Psoas muscle (tissue), 8 donors: ENCODE measurements at regions of chr16 and their contacts with region 1.

Region 1: DNA sequence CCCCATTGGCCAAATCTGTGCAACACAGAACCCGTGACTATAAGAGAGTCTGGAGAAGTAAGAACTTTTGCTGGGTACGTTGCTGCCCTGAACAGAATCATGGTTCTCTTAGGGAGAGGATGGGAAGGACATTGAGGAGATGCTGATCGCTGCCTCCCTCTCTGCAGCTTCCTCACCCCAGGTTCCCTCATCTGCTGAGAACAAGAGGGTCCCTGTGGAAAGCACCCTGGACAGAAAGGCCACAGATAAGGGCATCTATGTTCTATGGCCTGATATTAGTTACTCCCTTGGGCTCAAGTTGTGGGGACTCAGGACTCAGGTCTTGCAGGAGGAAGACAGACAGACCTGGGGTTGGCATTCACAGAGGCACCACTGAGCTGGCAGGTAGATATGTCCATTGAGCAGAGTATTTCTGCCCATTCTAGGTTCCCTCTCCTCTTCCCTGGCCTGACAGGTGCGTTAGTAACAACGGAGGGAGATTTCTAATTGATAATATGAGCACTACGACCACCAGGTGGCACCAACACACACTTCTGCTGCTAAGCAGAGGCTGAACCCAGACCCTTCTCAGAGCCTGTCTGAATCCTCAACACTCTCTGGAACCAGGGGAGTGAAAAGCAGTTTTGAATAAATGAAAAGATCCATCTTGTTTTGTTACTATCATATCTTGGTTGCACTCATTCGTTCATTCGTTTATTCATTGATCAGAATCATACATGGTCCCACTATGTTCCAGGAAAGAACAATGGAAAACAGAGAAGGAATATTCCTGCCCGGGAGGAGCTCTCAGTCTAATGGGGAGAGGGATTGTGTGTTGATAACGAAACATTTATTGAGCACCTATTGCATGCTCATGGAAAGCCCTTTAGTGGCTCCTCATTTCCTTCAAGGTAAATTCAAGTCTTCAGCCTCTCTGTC is 56.4 kb downstream of the SLC6A2 start:
- DNase-seq: peak; percentile 51 to 77
- ATAC-seq: peak; percentile 61 to 74 (median 66)
- H3K4me3 ChIP-seq: no peak overlapping the region
- H3K27ac ChIP-seq: no peak overlapping the region
- H3K4me1 ChIP-seq: no peaks in the 10 kb centered on the region
- H3K27me3 ChIP-seq: peaks cover 0 to 8% (median 4%) of the 10 kb centered on the region in 3 donors
- CTCF ChIP-seq: peak; percentile 73

Region 2: DNA sequence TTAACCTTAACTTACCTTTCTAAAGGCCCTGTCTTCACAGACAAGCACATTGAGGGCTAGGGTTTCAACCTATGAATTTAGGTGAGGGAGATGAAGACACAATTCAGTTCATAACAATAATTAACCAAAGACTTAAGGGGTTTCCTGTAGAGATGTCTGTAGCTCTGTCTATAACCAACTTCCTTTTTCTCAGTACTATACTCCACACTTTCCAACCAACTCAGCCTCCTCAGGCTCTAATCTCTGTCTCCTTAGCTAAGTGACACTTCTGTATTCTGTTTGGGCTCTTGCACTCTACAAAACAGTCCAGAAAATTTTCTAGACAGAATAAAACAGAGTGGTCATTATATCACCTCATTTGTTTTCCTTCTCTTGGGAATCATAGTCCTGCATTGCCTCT is 119.9 kb before region 1 on chr16:
- intact Hi-C with region 1: no loop called
- DNase-seq: no peak
- ATAC-seq: no peak
- H3K4me3 ChIP-seq: no peak overlapping the region
- H3K27ac ChIP-seq: no peak overlapping the region
- H3K4me1 ChIP-seq: no peaks in the 10 kb centered on the region
- H3K27me3 ChIP-seq: peaks cover 0 to 9% (median 0%) of the 10 kb centered on the region in 3 donors
- CTCF ChIP-seq: no peak

Region 3: GRCh38 chr16:55842369-55843104 is 130.3 kb after region 1 on chr16:
- intact Hi-C with region 1: loop called (anchors 2 kb)
- DNase-seq: no peak
- ATAC-seq: peak; percentile 58 to 76 (median 66)
- H3K4me3 ChIP-seq: no peak overlapping the region
- H3K27ac ChIP-seq: no peak overlapping the region
- H3K4me1 ChIP-seq: no peaks in the 10 kb centered on the region
- H3K27me3 ChIP-seq: peaks cover 0 to 4% (median 2%) of the 10 kb centered on the region in 3 donors
- CTCF ChIP-seq: peak; percentile 86